ENCODE measurements at regions of chr18 and their contacts with region 1.

Region 1: DNA sequence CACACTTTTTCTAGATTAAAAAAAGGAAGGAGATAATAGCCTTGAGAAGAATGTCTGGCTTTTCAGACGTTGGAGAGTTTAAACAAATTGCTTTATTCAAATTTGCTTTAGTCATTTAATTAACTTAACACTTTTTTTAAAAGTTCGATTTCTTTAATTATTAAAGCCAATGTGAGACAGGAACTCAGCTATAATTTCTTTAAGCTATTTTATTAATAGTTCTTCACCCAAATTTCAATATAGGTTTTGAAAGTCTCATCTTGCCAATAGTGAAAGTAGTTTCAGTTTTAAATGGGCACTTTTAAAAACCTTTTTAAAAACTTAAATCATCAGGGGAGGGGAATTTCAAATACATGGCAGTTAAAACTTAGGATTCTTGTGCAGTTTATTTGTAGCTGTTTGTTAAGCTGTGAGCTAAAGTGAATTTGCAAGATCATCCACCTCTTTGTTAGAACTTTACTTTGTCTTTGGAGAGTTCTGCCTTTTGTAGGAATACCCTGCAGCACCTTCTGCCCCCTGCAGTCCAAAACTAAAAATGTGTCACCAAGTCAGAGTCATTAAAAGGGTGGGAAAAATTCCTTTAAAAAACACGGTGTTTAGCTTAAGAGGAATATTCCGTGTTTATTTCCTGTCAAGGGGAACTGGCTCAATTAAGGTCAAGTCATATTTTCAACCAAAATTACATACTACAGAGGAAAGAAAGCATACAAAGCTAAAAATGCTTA is 4.6 kb downstream of the TGIF1 start:
- DNase-seq: no peak
- H3K4me3 ChIP-seq: peak overlapping the region; percentile 53
- H3K27ac ChIP-seq: peak overlapping the region; percentile 68
- H3K27me3 ChIP-seq: no peaks in the 10 kb centered on the region
- CTCF ChIP-seq: peak; percentile 74

Region 2: GRCh38 chr18:3297025-3297984 is 157.2 kb before region 1 on chr18:
- CTCF ChIA-PET with region 1: interaction called, 10 read pairs
- POLR2A ChIA-PET with region 1: no interaction called
- DNase-seq: peak; percentile 66
- H3K4me3 ChIP-seq: peak overlapping the region; percentile 68
- H3K27ac ChIP-seq: no peak overlapping the region
- H3K27me3 ChIP-seq: peaks cover 3% of the 10 kb centered on the region
- CTCF ChIP-seq: peak; percentile 29

Region 3: DNA sequence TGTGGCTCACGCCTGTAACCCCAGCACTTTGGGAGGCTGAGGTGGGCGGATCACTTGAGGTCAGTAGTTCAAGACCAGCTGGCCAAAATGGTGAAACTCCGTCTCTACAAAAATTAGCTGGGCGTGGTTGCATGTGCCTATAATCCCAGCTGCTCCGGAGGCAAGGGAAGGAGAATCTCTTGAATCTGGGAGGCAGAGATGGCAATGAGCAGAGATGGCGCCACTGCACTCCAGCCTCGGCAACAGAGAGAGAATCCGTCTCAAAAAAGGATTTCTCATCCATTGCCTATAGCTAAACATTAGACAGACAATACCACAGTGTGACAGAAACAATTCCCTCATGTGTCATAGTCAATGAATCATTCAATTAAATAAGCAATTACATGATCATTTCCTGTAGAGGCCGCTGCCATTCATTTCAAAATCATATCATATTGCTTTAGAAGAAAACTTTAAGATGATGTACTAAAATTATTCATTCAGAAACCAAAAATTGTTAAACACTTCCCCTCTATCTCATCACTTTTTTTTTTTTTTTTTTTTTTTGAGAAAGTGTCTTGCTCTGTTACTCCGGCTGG is 74.1 kb before region 1 on chr18:
- CTCF ChIA-PET with region 1: no interaction called
- POLR2A ChIA-PET with region 1: no interaction called
- DNase-seq: no peak
- H3K4me3 ChIP-seq: no peak overlapping the region
- H3K27ac ChIP-seq: no peak overlapping the region
- H3K27me3 ChIP-seq: no peaks in the 10 kb centered on the region
- CTCF ChIP-seq: no peak

Region 4: GRCh38 chr18:3466045-3466444 is 11.5 kb after region 1 on chr18:
- CTCF ChIA-PET with region 1: interaction called, 13 read pairs
- POLR2A ChIA-PET with region 1: interaction called, 9 read pairs
- DNase-seq: no peak
- H3K4me3 ChIP-seq: no peak overlapping the region
- H3K27ac ChIP-seq: no peak overlapping the region
- H3K27me3 ChIP-seq: no peaks in the 10 kb centered on the region
- CTCF ChIP-seq: no peak

Region 5: GRCh38 chr18:3585656-3586509 is 131.4 kb after region 1 on chr18:
- CTCF ChIA-PET with region 1: interaction called, 16 read pairs
- POLR2A ChIA-PET with region 1: interaction called, 3 read pairs
- DNase-seq: no peak
- H3K4me3 ChIP-seq: no peak overlapping the region
- H3K27ac ChIP-seq: no peak overlapping the region
- H3K27me3 ChIP-seq: no peaks in the 10 kb centered on the region
- CTCF ChIP-seq: peak; percentile 74

Region 6: DNA sequence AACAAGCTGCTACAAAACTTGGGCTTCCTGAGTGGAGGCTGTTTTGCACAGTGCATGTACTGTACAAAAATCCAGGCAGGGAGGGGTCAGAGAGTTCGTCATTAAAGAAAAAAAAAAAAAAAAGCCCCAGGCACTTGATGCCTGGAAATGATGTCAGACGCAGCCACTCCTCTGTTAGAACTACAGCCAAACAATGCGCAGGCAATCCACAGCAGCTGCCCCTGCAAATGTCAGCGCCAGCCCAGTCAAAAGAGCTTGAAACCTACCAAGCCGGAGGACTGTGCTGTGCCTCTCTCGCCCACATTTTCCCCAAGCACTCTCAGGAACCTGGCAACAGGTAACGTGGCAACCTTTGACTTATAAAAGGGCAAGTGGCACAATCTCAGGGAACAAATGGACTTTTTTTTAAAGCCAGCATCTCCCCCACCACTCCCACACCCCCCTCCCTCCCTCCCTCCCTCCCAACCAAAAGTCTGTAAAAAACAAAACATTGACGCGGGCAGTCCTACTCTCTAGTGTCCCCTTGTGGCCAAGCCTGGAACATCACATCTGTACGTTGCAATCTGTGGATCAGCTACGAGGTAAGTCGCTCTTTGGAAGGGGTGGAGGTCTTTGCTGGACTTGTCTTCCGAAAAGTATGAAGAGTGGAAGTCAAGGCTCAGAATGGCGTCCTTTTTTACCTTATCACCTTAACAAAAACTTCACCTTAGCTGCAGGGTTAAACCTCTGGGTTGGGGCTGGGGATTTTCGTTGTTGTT is 139.6 kb after region 1 on chr18:
- CTCF ChIA-PET with region 1: interaction called, 58 read pairs
- POLR2A ChIA-PET with region 1: interaction called, 44 read pairs
- DNase-seq: peak; percentile 96
- H3K4me3 ChIP-seq: peak overlapping the region; percentile 76
- H3K27ac ChIP-seq: peak overlapping the region; percentile 100
- H3K27me3 ChIP-seq: no peaks in the 10 kb centered on the region
- CTCF ChIP-seq: peak; percentile 89

Measured in AG04450 (cell line).